CD8-positive, alpha-beta memory T cell (primary cell): ENCODE measurements at regions of chr16 and their contacts with region 1.

Region 1: GRCh38 chr16:68257906-68258800 is 6.2 kb upstream of the SLC7A6 start:
- DNase-seq: no peak
- H3K4me3 ChIP-seq: no peak overlapping the region
- H3K4me3 Mint-ChIP-seq: no peak overlapping the region
- H3K27ac ChIP-seq: no peak overlapping the region
- H3K27ac Mint-ChIP-seq: peak overlapping the region in 1 of 8 donors; percentile 58
- H3K4me1 ChIP-seq: peaks cover 7% of the 10 kb centered on the region
- H3K4me1 Mint-ChIP-seq: peaks cover 7 to 11% (median 10%) of the 10 kb centered on the region in 3 donors
- H3K27me3 ChIP-seq: no peaks in the 10 kb centered on the region
- H3K27me3 Mint-ChIP-seq: peaks cover 0 to 1% of the 10 kb centered on the region in 2 donors

Region 2: GRCh38 chr16:68244903-68245853 is 13.0 kb before region 1 on chr16 and contains the start of gene PLA2G15:
- CTCF ChIA-PET with region 1: interaction called, 42 read pairs
- POLR2A ChIA-PET with region 1: interaction called, 5 read pairs
- DNase-seq: peak; percentile 93 to 97 (median 95)
- H3K4me3 ChIP-seq: peak within 1 kb of the TSS; percentile 98
- H3K4me3 Mint-ChIP-seq: peak within 1 kb of the TSS; percentile 97 to 99 (median 98)
- H3K27ac ChIP-seq: peak within 1 kb of the TSS; percentile 57
- H3K27ac Mint-ChIP-seq: peak within 1 kb of the TSS in 7 of 8 donors; percentile 72 to 90 (median 85)
- H3K4me1 ChIP-seq: peaks cover 19% of the 10 kb centered on the region
- H3K4me1 Mint-ChIP-seq: peaks cover 19 to 38% (median 21%) of the 10 kb centered on the region in 3 donors
- H3K27me3 ChIP-seq: no peaks in the 10 kb centered on the region
- H3K27me3 Mint-ChIP-seq: no peaks in the 10 kb centered on the region
- total RNA-seq, gene PLA2G15: 9.0 to 9.4 TPM

Region 3: DNA sequence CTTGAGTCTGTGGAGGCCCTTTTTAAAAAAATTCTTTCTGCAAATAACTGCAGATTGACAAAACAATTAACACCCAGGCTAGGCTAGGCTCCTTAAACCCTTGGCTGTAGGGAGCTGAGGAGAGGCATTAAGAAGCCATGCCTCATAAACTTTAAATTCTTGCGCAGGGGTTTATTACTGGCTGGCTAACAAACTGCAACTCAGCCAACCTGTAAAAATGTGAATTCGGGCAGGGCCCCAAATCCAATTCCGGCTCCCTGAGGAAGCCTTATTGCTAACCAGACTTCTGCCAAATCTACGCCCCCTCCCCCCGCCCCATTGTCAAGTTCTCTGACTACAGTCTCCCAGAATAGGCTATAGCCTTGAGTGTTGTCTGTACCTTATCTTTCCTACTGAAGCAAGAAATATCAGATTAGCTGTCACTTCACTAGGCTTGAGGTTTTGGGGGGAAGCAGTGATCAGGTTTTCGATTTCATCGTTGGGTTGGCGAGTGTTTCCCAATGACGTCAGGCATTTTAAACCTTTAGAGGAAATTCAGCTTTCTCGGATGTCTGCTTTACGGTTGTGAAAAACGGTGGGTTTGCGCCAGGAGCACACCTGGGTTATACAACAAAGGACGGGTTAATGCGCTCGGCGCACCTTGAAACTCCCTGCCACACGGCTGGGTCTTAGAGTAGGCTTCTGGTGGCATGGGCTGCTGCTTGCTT is 389.0 kb after region 1 on chr16:
- CTCF ChIA-PET with region 1: no interaction called
- POLR2A ChIA-PET with region 1: no interaction called
- DNase-seq: no peak
- H3K4me3 ChIP-seq: no peak overlapping the region
- H3K4me3 Mint-ChIP-seq: no peak overlapping the region
- H3K27ac ChIP-seq: no peak overlapping the region
- H3K27ac Mint-ChIP-seq: no peak overlapping the region
- H3K4me1 ChIP-seq: peaks cover 13% of the 10 kb centered on the region
- H3K4me1 Mint-ChIP-seq: peaks cover 9 to 27% (median 12%) of the 10 kb centered on the region in 3 donors
- H3K27me3 ChIP-seq: peaks cover 51% of the 10 kb centered on the region
- H3K27me3 Mint-ChIP-seq: peaks cover 58 to 73% of the 10 kb centered on the region in 2 donors